CD4-positive, alpha-beta memory T cell (primary cell): ENCODE measurements at regions of chr12 and their contacts with region 1.

Region 1: DNA sequence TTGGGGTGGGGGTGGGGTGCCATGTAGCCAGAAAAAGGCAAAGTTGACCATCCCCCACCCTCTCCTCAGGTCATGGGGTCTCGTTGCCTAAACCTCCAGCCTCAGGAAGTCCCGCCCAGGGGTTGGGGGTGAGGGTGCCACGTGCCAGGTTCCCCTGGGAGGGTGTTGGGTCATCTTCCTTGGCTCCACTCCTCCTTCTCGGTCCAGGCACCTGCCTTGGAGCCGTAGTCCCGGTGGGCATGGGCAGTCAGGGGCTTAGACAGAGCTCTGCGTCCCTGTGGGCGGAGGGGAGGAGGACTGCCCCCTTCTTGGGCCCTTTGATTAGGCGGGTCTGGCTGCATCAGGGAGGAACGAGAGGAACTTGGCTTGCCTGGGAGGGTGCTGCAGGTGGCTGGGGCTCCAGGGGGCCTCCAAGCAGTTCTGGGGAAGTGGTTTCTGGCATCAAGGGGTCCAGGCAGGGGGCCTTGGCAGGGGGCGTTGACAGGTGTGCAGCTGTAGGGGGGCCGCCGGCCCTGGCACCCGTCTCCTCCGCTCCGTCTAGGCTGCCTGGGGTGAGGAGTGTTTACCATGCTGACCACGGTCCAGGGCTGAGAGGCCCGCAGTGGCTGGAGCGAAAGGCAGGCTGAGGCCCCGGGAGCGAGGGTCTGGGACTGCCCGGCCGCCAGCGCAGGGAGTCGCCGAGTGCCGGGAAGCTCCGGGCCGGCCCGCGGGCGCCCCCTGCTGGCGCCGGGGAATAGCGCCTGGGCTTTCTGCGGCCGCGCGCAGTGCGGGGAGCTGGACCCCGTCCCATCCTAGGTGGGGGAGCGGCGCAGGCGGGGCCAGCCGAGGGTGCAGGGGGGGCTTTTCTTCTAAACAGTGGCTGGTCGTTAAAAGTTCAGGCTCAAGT is 7.9 kb downstream of the SETD1B start:
- DNase-seq: peak; percentile 61 to 81 (median 74)
- H3K4me3 ChIP-seq: peak overlapping the region; percentile 42 to 63
- H3K4me3 Mint-ChIP-seq: peak overlapping the region; percentile 80 to 90 (median 86)
- H3K27ac ChIP-seq: peak overlapping the region; percentile 50
- H3K27ac Mint-ChIP-seq: peak overlapping the region in 6 of 7 donors; percentile 42 to 93 (median 80)
- H3K4me1 ChIP-seq: peaks cover 61% of the 10 kb centered on the region
- H3K4me1 Mint-ChIP-seq: peaks cover 26 to 67% (median 49%) of the 10 kb centered on the region in 4 donors
- H3K27me3 ChIP-seq: no peaks in the 10 kb centered on the region
- H3K27me3 Mint-ChIP-seq: no peaks in the 10 kb centered on the region

Region 2: DNA sequence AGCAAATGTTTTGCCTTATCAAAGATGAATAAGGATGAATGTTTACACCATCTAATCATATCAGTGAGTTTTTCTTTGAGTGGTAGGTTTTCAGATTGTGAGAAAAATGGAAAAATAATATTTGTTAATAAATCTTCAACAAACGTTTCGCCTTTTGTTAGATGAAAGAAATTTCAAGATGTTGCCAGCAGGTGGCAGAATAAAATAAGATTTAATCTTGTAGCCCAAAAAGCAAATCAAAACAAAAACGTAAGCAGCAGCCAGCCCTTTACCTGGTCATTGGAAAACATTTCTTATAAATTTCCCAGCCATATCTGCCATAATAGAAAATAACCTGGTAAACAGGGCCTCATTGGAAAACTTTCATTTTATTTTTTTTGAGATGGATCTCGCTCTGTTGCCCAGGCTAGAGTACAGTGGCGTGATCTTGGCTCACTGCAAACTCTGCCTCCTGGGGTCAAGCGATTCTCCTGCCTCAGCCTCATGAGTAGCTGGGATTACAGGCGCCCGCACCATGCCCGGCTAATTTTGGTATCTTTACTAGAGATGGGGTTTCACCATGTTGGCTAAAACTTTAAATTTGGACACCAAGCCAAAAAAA is 114.5 kb before region 1 on chr12:
- CTCF ChIA-PET with region 1: interaction called, 13 read pairs
- POLR2A ChIA-PET with region 1: no interaction called
- intact Hi-C with region 1: loop called (anchors 2 kb)
- DNase-seq: peak in 4 of 5 donors; percentile 61 to 70 (median 67)
- H3K4me3 ChIP-seq: no peak overlapping the region
- H3K4me3 Mint-ChIP-seq: no peak overlapping the region
- H3K27ac ChIP-seq: no peak overlapping the region
- H3K27ac Mint-ChIP-seq: peak overlapping the region in 1 of 7 donors; percentile 19
- H3K4me1 ChIP-seq: no peaks in the 10 kb centered on the region
- H3K4me1 Mint-ChIP-seq: peaks cover 0 to 5% (median 2%) of the 10 kb centered on the region in 4 donors
- H3K27me3 ChIP-seq: no peaks in the 10 kb centered on the region
- H3K27me3 Mint-ChIP-seq: no peaks in the 10 kb centered on the region

Region 3: DNA sequence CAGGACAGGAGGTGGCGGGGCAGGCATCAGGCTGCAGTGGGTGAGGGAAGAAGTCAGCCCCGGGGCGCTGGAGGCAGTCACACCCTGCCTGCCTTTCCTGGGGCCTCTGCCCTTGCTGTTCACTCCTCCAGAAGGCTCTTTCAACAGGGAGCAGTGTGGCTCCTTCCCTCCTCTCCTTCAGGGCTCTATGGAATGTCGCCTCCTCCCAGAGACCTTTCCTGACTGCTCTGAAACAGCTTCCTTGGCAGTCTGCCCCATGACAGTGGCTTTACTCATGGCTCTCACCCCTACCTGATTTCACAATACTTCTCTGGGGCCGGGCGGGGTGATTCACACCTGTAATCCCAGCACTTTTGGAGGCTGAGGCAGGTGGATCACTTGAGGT is 25.2 kb before region 1 on chr12:
- CTCF ChIA-PET with region 1: interaction called, 918 read pairs
- POLR2A ChIA-PET with region 1: interaction called, 2,727 read pairs
- intact Hi-C with region 1: no loop called
- DNase-seq: peak; percentile 39 to 83 (median 46)
- H3K4me3 ChIP-seq: peak overlapping the region in 1 of 2 donors; percentile 49
- H3K4me3 Mint-ChIP-seq: peak overlapping the region; percentile 82 to 99 (median 89)
- H3K27ac ChIP-seq: peak overlapping the region; percentile 97
- H3K27ac Mint-ChIP-seq: peak overlapping the region; percentile 98 to 100 (median 99)
- H3K4me1 ChIP-seq: peaks cover 94% of the 10 kb centered on the region
- H3K4me1 Mint-ChIP-seq: peaks cover 62 to 96% (median 80%) of the 10 kb centered on the region in 4 donors
- H3K27me3 ChIP-seq: no peaks in the 10 kb centered on the region
- H3K27me3 Mint-ChIP-seq: no peaks in the 10 kb centered on the region

Region 4: DNA sequence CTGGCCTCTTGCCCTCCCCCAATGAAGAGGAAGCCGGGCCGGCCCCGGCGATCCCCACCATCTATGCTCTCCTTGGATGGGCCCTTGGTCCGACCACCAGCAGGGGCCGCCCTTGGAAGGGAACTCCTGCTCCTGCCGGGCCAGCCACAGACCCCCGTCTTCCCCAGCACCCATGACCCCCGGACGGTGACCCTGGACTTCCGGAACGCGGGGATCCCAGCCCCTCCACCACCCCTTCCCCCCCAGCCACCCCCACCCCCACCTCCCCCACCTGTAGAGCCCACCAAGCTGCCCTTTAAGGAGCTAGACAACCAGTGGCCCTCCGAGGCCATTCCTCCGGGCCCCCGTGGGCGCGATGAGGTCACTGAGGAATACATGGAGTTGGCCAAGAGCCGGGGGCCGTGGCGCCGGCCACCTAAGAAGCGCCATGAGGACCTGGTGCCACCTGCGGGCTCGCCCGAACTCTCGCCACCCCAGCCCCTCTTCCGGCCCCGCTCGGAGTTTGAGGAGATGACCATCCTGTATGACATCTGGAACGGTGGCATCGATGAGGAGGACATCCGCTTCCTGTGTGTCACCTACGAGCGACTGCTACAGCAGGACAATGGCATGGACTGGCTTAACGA is 11.5 kb after region 1 on chr12:
- CTCF ChIA-PET with region 1: interaction called, 28 read pairs
- POLR2A ChIA-PET with region 1: interaction called, 2,727 read pairs
- intact Hi-C with region 1: no loop called
- DNase-seq: no peak
- H3K4me3 ChIP-seq: no peak overlapping the region
- H3K4me3 Mint-ChIP-seq: no peak overlapping the region
- H3K27ac ChIP-seq: no peak overlapping the region
- H3K27ac Mint-ChIP-seq: peak overlapping the region in 2 of 7 donors; percentile 4 to 31
- H3K4me1 ChIP-seq: no peaks in the 10 kb centered on the region
- H3K4me1 Mint-ChIP-seq: peaks cover 0 to under 1% (median 0%) of the 10 kb centered on the region in 4 donors
- H3K27me3 ChIP-seq: no peaks in the 10 kb centered on the region
- H3K27me3 Mint-ChIP-seq: no peaks in the 10 kb centered on the region

Region 5: GRCh38 chr12:121888478-121889266 is 77.0 kb after region 1 on chr12 and contains the start of gene PSMD9:
- CTCF ChIA-PET with region 1: interaction called, 3 read pairs
- POLR2A ChIA-PET with region 1: interaction called, 64 read pairs
- intact Hi-C with region 1: loop called (anchors 2 kb)
- DNase-seq: peak; percentile 97 to 99 (median 98)
- H3K4me3 ChIP-seq: peak within 1 kb of the TSS; percentile 77 to 88
- H3K4me3 Mint-ChIP-seq: peak within 1 kb of the TSS; percentile 96 to 99 (median 98)
- H3K27ac ChIP-seq: peak within 1 kb of the TSS; percentile 91
- H3K27ac Mint-ChIP-seq: peak within 1 kb of the TSS; percentile 99 to 100 (median 99)
- H3K4me1 ChIP-seq: peaks cover 29% of the 10 kb centered on the region
- H3K4me1 Mint-ChIP-seq: peaks cover 19 to 43% (median 33%) of the 10 kb centered on the region in 4 donors
- H3K27me3 ChIP-seq: no peaks in the 10 kb centered on the region
- H3K27me3 Mint-ChIP-seq: peaks cover 0 to 3% of the 10 kb centered on the region in 2 donors
- total RNA-seq, gene PSMD9: 41.4 to 42.7 TPM